PC-9 (cell line): ENCODE measurements at regions of chr15 and their contacts with region 1.

Region 1: DNA sequence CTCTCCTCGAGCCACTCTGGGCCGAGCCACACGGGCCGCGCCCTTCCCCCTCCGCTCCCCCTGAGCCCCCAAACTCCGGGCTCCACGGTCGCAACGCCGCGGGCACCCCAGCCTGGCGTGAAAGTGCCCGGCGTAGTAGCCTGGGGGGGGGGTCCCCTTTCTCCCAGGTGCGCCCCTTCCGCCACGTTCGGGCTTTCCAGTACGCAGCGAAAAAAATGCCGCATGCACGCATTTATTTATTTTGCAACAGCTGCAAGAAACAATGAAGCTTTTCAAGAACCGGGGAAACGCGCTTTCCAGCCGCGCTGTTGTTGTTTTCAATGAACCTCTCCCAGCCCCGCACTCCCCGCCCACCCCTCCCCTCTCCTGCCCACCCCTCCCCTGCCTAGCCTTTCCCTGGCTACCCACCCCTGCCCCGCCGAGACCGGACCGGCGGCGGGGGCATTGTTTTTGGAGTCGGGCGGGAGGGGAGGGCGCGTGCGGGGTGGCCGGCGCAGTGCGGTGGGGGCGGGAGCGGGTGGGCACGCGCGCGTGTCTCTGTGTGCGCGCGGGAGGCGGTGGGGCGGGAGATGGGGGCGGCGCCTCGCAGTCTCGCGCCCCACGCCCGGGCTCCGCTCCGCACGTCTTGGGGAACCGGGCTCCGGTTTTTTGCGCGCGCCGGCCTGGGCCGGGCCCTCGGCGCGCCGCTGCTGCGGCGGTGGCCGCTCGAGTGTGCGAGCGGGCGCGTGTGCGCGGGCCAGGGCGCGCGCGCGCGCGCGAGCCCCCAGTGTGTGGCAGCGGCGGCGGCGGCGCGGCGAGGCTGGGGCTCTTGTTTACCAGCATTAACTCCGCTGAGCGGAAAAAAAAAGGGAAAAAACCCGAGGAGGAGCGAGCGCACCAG is at the start of gene IGF1R:
- DNase-seq: peak; percentile 76 to 93
- H3K4me3 ChIP-seq: peak within 1 kb of the TSS; percentile 91
- H3K27ac ChIP-seq: peak within 1 kb of the TSS; percentile 60
- H3K4me1 ChIP-seq: peaks cover 13% of the 10 kb centered on the region
- H3K27me3 ChIP-seq: no peaks in the 10 kb centered on the region
- CTCF ChIP-seq: peak; percentile 52; the same call in 1 of the 2 replicates
- total RNA-seq, gene IGF1R: 71.3 and 78.9 TPM in 2 replicates

Region 2: GRCh38 chr15:98442379-98442833 is 205.6 kb before region 1 on chr15:
- CTCF ChIA-PET with region 1: interaction called, 3 read pairs
- POLR2A ChIA-PET with region 1: no interaction called
- intact Hi-C with region 1: loop called (anchors 2 kb)
- DNase-seq: peak; percentile 74 to 79
- H3K4me3 ChIP-seq: no peak overlapping the region
- H3K27ac ChIP-seq: no peak overlapping the region
- H3K4me1 ChIP-seq: peaks cover 15% of the 10 kb centered on the region
- H3K27me3 ChIP-seq: peaks cover 24% of the 10 kb centered on the region; the same call in 1 of the 2 replicates
- CTCF ChIP-seq: peak; percentile 88

Region 3: DNA sequence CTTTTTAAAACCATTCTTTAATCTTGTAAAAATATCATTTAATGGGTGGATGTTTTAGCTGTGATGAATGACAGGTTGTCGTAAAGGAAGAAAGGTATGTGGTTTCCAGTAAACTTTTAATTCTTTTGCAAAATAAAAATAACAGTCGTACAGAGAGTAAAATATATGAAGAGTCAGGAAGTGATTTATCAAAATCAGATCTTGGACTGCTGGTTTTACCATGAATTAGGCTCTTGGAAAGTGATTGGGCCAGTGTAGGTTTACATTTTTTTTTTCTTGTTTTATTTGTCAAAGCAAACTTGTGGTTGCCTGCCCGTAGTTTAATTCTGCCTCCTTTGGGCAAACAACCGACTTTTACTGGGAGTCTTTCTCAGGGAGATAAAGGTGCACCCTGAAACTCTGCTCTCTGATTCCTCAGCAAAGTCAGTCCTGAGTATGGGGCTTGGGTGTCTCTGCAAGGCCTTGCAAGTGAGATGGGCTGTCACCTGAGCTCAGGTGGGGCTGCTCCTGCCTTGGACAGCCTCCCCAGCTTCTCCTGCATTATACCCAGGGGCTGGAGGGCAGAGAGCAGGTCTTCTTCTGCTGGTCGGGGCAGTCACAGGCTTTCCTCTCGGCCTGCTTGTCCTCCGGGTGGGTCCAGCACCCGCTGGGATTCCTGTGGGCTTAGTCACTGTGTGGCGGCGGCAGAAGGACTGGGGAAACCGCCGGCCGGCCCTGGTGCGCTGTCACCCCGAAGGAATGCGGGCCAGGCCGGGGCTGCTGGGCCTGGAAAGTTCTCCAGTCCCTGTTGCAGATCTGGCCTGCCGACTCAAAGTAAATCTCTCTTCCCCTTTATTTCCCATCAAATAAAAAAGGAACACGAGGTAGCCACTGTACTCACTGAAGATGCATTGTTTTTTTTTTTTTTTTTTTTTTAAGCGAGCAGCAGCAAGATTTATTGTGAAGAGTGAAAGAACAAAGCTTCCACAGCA is 79.4 kb after region 1 on chr15:
- CTCF ChIA-PET with region 1: no interaction called
- POLR2A ChIA-PET with region 1: no interaction called
- intact Hi-C with region 1: loop called (anchors 1 kb)
- DNase-seq: peak; percentile 94 to 97
- H3K4me3 ChIP-seq: peak overlapping the region; percentile 14; the same call in 1 of the 2 replicates
- H3K27ac ChIP-seq: peak overlapping the region; percentile 91
- H3K4me1 ChIP-seq: peaks cover 45% of the 10 kb centered on the region
- H3K27me3 ChIP-seq: no peaks in the 10 kb centered on the region
- CTCF ChIP-seq: no peak

Region 4: GRCh38 chr15:98850961-98851573 is 203.1 kb after region 1 on chr15:
- CTCF ChIA-PET with region 1: interaction called, 5 read pairs
- POLR2A ChIA-PET with region 1: no interaction called
- intact Hi-C with region 1: loop called (anchors 1 kb)
- DNase-seq: peak; percentile 35 to 72
- H3K4me3 ChIP-seq: peak overlapping the region; percentile 59; the same call in 1 of the 2 replicates
- H3K27ac ChIP-seq: peak overlapping the region; percentile 31; the same call in 1 of the 2 replicates
- H3K4me1 ChIP-seq: peaks cover 50% of the 10 kb centered on the region
- H3K27me3 ChIP-seq: no peaks in the 10 kb centered on the region
- CTCF ChIP-seq: peak; percentile 79

Region 5: GRCh38 chr15:98896802-98897732 is 249.1 kb after region 1 on chr15:
- CTCF ChIA-PET with region 1: no interaction called
- POLR2A ChIA-PET with region 1: no interaction called
- intact Hi-C with region 1: loop called (anchors 2 kb)
- DNase-seq: peak; percentile 52 to 95
- H3K4me3 ChIP-seq: peak overlapping the region; percentile 10; the same call in 1 of the 2 replicates
- H3K27ac ChIP-seq: peak overlapping the region; percentile 97
- H3K4me1 ChIP-seq: peaks cover 41% of the 10 kb centered on the region
- H3K27me3 ChIP-seq: no peaks in the 10 kb centered on the region
- CTCF ChIP-seq: no peak

Region 6: DNA sequence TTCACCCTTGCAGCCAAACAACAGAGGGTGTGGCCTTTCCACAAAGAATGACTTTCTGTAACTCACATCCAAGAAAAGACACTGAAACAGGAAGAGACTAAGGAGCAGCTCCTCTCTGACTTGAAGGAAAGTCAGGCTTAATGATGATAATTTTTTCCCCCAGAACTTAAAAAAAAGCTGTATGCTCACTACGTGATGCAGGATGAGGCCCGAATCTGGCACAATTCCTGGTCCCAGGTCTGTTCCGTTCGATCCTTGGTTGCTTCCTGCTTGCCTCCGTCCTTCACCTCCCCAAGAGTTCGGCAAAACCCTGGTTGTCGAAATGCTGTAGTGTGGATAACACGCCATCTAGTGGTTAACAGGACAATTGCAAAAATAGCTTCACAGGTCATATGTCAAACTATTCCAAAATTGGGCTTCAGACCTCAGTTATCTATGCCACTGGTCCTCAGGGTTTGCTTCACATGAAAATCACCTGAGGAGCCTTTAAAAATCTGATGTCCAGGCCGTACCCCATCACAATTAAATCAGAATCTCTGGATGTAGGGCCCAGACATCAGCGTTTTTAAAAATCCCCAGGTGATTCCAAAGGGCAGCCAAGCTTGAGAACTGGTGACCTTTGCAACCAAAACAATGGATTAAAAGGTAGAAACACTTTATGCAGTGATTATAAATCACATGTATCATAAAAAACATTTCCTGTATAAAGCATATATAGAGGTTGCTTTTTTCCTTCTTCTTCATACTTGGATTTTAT is 428.7 kb after region 1 on chr15:
- CTCF ChIA-PET with region 1: no interaction called
- POLR2A ChIA-PET with region 1: interaction called, 8 read pairs
- intact Hi-C with region 1: loop called (anchors 5 kb)
- DNase-seq: peak; percentile 51 to 58
- H3K4me3 ChIP-seq: peak overlapping the region; percentile 51; the same call in 1 of the 2 replicates
- H3K27ac ChIP-seq: no peak overlapping the region
- H3K4me1 ChIP-seq: no peaks in the 10 kb centered on the region
- H3K27me3 ChIP-seq: no peaks in the 10 kb centered on the region
- CTCF ChIP-seq: peak; percentile 92

Region 7: DNA sequence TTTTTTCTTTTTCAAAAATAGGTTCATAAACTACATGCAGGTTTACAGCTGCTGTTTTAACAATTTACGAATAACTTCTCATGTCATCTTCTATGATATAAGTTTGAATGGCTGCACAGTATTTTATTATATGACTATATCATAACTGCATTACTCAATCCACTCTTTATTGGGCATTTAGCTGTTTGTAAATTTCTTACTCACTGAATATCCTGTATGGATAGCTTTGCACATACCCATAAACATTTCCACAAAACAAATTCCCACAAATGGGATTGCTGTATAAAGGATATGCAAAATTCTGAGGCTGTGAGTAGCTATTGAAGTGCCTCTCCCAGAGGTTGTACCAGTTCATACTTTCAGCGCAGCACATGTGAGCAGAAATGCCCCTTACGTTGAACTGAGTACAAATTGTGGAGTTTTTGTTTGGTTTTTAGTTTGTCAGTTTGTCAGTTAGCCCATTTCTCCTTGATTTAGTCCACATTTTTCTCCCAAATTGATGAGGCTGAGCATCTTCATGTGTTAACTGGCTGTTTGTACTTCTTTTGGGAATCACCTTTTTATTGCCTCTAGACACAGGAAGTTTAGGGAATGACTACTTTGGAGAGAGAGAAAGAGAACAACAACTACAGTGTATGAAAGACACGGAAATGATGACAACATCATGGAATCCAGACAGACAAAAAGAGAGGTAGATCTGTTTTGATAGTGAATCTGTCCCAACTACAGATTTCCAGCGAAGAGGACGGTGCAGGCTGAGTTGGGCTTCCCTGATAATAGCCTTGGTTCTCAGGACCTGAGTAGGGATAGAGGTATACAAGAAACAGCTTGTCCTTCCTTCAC is 576.6 kb after region 1 on chr15:
- CTCF ChIA-PET with region 1: no interaction called
- POLR2A ChIA-PET with region 1: no interaction called
- intact Hi-C with region 1: no loop called
- DNase-seq: no peak
- H3K4me3 ChIP-seq: no peak overlapping the region
- H3K27ac ChIP-seq: no peak overlapping the region
- H3K4me1 ChIP-seq: no peaks in the 10 kb centered on the region
- H3K27me3 ChIP-seq: no peaks in the 10 kb centered on the region
- CTCF ChIP-seq: no peak